ENCODE measurements at regions of chr14 and their contacts with region 1.

Region 1: GRCh38 chr14:95774265-95775160 is 60.6 kb upstream of the TCL1A start:
- H3K4me3 Mint-ChIP-seq: no peak overlapping the region
- H3K27ac Mint-ChIP-seq: no peak overlapping the region
- H3K4me1 Mint-ChIP-seq: no peaks in the 10 kb centered on the region
- H3K27me3 Mint-ChIP-seq: peaks cover 5% of the 10 kb centered on the region

Region 2: GRCh38 chr14:95424529-95424928 is 350.0 kb before region 1 on chr14:
- intact Hi-C with region 1: loop called (anchors 10 kb)
- H3K4me3 Mint-ChIP-seq: no peak overlapping the region
- H3K27ac Mint-ChIP-seq: no peak overlapping the region
- H3K4me1 Mint-ChIP-seq: no peaks in the 10 kb centered on the region
- H3K27me3 Mint-ChIP-seq: no peaks in the 10 kb centered on the region

Region 3: GRCh38 chr14:95850417-95850816 is 75.9 kb after region 1 on chr14:
- intact Hi-C with region 1: no loop called
- H3K4me3 Mint-ChIP-seq: no peak overlapping the region
- H3K27ac Mint-ChIP-seq: no peak overlapping the region
- H3K4me1 Mint-ChIP-seq: no peaks in the 10 kb centered on the region
- H3K27me3 Mint-ChIP-seq: peaks cover 3% of the 10 kb centered on the region

Region 4: DNA sequence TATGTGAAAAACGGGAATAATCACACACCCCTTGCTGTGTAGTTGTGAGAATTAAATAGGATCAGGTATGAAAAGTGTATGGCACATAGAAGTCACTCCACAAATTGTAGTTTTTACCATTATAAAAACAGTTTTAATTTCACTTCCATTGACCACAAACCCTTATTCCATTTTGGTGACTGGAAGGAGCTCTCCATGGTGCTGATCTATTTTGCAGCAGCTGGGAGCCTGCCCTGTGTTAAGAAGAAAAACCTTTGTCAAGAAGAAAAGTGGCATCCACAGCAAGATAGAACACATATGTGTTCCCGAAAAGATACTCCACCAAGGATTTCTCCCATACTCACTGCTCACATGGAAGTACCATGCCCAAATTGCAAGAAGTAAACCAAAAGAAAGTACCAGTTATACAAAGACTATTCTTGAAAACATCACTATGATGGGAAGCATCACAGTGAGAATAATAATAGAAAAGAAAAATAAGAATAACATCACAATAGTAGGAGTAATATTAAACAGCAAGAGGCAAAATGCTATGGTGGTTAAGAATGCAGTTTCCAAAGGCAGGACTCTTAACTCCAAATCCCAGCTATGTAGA is 160.8 kb after region 1 on chr14:
- intact Hi-C with region 1: no loop called
- H3K4me3 Mint-ChIP-seq: no peak overlapping the region
- H3K27ac Mint-ChIP-seq: no peak overlapping the region
- H3K4me1 Mint-ChIP-seq: no peaks in the 10 kb centered on the region
- H3K27me3 Mint-ChIP-seq: no peaks in the 10 kb centered on the region

Measured in dendritic cell treated with granulocyte-macrophage colony-stimulating factor and Interleukin-4, amounts not matched to agents 40 ng/mL and 50 ng/mL, for 4 days (primary cell).